ENCODE measurements at regions of chr22 and their contacts with region 1.

Region 1: GRCh38 chr22:39170825-39171622 is 18.5 kb upstream of the CBX7 start:
- DNase-seq: peak; percentile 89
- ATAC-seq: peak; percentile 87 to 88
- H3K4me3 ChIP-seq: peak overlapping the region; percentile 9
- H3K27ac ChIP-seq: no peak overlapping the region
- H3K4me1 ChIP-seq: peaks cover 48% of the 10 kb centered on the region
- H3K27me3 ChIP-seq: no peaks in the 10 kb centered on the region
- CTCF ChIP-seq: peak; percentile 99

Region 2: DNA sequence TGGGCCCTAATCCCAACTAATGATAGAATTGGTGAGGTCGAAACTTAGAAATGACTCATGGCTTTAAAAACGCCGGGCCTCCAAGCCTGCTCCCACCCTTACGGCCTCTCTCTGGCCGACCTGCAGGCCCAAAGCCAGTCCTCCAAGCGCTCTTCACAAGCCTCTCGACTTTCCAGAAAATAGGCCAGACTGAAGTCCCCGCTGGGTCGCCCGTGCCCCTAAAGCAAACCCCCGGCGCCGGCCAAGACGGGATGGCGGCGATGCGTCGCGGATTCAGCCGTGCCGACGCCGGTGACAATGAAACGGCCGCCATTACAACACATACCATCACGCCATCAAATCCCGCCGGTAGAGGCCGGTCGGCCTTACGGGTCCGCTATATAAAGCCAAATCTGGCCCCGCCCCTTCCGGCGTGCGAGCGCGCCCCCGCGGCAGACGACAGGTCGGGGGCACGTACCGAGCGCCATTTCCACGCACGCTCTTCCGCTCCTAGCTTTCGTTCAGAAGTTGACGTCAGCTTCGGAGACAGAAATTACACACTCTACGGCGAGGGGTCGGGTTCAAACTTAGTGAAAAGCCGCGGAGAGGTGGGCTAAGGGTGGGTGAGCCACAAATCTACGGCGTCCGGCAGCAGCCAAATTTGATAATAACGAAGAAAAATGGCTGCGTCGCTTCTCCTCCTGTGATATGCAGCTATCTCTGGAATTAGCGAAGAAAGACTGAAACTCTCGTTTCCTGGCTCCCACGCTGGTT is 148.4 kb after region 1 on chr22 and contains the start of gene RPL3:
- intact Hi-C with region 1: loop called (anchors 10 kb)
- DNase-seq: peak; percentile 98
- ATAC-seq: peak; percentile 93 to 96
- H3K4me3 ChIP-seq: peak within 1 kb of the TSS; percentile 80
- H3K27ac ChIP-seq: peak within 1 kb of the TSS; percentile 97
- H3K4me1 ChIP-seq: peaks cover 46% of the 10 kb centered on the region
- H3K27me3 ChIP-seq: no peaks in the 10 kb centered on the region
- CTCF ChIP-seq: peak; percentile 44
- total RNA-seq, gene RPL3: 1,467 TPM

Measured in lower lobe of right lung (tissue), 2 donors.